T-cell (primary cell): ENCODE measurements at regions of chr11 and their contacts with region 1.

Region 1: GRCh38 chr11:65569973-65570918 is at the start of gene ZNRD2:
- DNase-seq: peak; percentile 95 to 99 (median 98)
- ATAC-seq: peak; percentile 73 to 78 (median 76)
- H3K4me3 ChIP-seq: peak within 1 kb of the TSS; percentile 76 to 83
- H3K4me3 Mint-ChIP-seq: peak within 1 kb of the TSS; percentile 98 to 99 (median 98)
- H3K27ac ChIP-seq: peak within 1 kb of the TSS; percentile 100
- H3K27ac Mint-ChIP-seq: peak within 1 kb of the TSS; percentile 98
- H3K4me1 ChIP-seq: peaks cover 38 to 86% of the 10 kb centered on the region in 2 experiments
- H3K4me1 Mint-ChIP-seq: peaks cover 74 to 87% (median 79%) of the 10 kb centered on the region in 3 donors
- H3K27me3 ChIP-seq: no peaks in the 10 kb centered on the region
- H3K27me3 Mint-ChIP-seq: no peaks in the 10 kb centered on the region
- total RNA-seq, gene ZNRD2: 32.5 to 36.9 (median 34.5) TPM

Region 2: DNA sequence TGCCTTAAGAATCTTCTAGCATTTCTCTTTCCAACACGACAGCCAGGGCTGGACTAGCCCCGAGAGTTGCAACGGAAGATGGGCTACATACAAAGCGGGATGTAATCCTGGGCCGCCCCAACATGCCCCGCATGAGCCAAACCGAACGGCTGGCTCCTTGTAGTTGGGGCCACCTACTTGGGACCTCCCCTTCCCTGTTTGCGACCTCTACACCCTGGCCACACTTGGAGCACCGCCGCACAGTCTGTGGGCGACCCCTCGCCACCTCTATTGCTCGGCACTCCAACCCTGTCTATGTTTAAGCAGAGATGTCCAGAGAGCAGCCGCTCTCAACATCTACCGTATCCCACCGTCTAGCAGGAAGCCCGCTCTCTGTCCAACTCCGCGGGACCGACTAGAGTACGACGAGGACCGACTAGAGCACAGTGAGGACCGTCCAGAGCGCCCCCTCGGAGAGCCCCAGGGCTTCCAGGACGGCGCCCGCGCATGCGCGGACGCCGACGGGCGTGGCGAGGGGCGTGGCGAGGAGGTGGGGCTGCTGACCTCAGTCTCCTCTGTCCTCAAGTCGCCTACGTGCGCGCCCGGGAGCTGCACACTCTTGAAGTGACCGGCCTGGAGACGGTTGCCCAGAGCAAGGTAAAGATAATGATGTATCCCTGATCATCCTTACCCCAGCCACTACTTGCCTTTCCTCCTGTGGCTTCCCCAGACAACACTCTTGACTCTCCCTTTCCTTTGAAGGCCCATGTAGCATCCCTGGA is 115.4 kb before region 1 on chr11:
- CTCF ChIA-PET with region 1: no interaction called
- POLR2A ChIA-PET with region 1: no interaction called
- DNase-seq: peak; percentile 26 to 85 (median 61)
- ATAC-seq: peak; percentile 90 to 94 (median 92)
- H3K4me3 ChIP-seq: peak overlapping the region; percentile 65 to 73
- H3K4me3 Mint-ChIP-seq: peak overlapping the region; percentile 86 to 94 (median 88)
- H3K27ac ChIP-seq: peak overlapping the region; percentile 61
- H3K27ac Mint-ChIP-seq: peak overlapping the region; percentile 86 to 87
- H3K4me1 ChIP-seq: peaks cover 4 to 13% of the 10 kb centered on the region in 2 experiments
- H3K4me1 Mint-ChIP-seq: peaks cover 13 to 31% (median 29%) of the 10 kb centered on the region in 3 donors
- H3K27me3 ChIP-seq: no peaks in the 10 kb centered on the region
- H3K27me3 Mint-ChIP-seq: no peaks in the 10 kb centered on the region

Region 3: GRCh38 chr11:65524741-65525545 is 45.3 kb before region 1 on chr11 and contains the start of gene SCYL1:
- CTCF ChIA-PET with region 1: no interaction called
- POLR2A ChIA-PET with region 1: interaction called, 8 to 10 read pairs
- DNase-seq: peak; percentile 55 to 87 (median 74)
- ATAC-seq: peak; percentile 77 to 90 (median 82)
- H3K4me3 ChIP-seq: peak within 1 kb of the TSS; percentile 78 to 89
- H3K4me3 Mint-ChIP-seq: peak within 1 kb of the TSS; percentile 73 to 81 (median 79)
- H3K27ac ChIP-seq: peak within 1 kb of the TSS; percentile 70
- H3K27ac Mint-ChIP-seq: peak within 1 kb of the TSS; percentile 86 to 93
- H3K4me1 ChIP-seq: peaks cover 37 to 55% of the 10 kb centered on the region in 2 experiments
- H3K4me1 Mint-ChIP-seq: peaks cover 53 to 59% (median 54%) of the 10 kb centered on the region in 3 donors
- H3K27me3 ChIP-seq: no peaks in the 10 kb centered on the region
- H3K27me3 Mint-ChIP-seq: peaks cover 0 to 2% of the 10 kb centered on the region in 2 donors
- total RNA-seq, gene SCYL1: 66.4 to 96.8 (median 76.8) TPM

Region 4: DNA sequence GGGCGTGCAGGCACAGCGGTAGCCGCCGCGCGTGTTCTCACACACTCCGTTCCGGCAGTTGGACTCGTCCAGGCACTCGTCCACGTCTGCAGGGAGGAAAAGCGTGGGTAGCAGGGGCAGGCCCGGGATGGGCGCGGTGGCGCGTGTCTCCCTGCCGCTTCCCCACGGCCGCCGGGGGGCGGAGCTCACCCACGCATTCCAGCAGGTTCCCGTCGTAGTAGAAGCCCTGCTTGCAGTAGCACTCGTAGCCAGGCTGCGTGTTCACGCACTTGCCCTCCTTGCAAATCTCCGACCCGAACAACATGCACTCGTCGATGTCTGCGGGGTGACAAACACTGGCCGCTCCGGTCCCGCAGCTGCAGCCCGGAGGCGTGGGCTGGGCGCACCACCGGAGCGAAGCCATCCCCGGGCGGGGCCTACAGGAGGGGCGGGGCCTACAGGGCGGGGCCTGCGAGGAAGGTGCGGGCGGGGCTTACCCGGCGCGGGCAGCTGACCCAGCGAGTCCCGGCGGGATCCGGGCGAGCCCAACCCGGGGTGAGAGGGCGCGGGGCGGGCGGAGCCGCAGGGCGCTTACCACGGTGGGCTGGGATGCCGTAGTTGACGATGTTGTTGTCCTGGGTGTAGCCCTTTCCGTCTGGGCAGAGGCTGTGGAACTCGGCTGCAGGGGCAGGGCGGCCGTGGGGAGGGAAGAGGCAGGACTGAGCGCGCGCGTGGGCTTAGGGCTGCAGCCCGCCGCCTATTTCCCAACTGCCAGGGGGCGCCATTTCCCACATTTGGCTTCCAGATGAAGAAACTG is 29.8 kb before region 1 on chr11:
- CTCF ChIA-PET with region 1: interaction called, 4 to 17 read pairs
- POLR2A ChIA-PET with region 1: no interaction called
- DNase-seq: peak; percentile 61 to 92 (median 82)
- ATAC-seq: peak; percentile 83 to 89 (median 85)
- H3K4me3 ChIP-seq: peak overlapping the region; percentile 67 to 74
- H3K4me3 Mint-ChIP-seq: peak overlapping the region; percentile 73 to 86 (median 80)
- H3K27ac ChIP-seq: peak overlapping the region; percentile 54
- H3K27ac Mint-ChIP-seq: peak overlapping the region; percentile 87 to 88
- H3K4me1 ChIP-seq: peaks cover 8 to 23% of the 10 kb centered on the region in 2 experiments
- H3K4me1 Mint-ChIP-seq: peaks cover 15 to 31% (median 28%) of the 10 kb centered on the region in 3 donors
- H3K27me3 ChIP-seq: no peaks in the 10 kb centered on the region
- H3K27me3 Mint-ChIP-seq: no peaks in the 10 kb centered on the region